ENCODE measurements at regions of chr12 and their contacts with region 1.

Region 1: DNA sequence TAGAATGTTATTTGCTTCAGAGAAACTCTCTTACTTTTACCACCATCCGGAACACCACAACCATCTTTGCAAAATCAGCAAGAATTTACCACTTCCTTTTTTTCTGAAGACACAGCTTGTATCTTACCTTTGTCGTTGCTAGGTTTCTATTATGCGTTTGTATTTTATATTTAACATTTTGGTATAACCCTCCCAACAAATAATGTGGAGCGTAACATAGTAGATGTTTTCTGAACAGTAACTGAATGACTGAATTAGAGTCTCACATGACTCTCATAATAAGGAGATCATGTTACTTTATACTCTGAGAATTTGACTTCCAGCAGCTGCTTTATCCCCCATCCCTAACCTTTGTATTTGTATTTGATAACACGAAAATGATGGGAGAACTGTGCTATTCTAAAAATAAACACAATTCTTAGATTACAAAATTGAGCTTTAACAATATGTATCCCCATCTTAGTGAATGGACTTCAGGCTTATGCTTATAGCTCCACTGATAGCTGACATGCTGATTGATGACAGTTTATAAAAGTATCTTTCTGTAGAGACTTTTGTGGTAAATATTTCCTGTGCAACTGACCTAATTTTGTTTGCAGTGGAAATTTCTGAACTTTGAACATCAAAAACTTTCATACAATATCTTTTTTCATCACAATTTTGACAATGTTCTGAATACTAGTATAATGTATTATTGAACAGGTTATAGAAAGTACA is 7.9 kb upstream of the KLRB1 start:
- DNase-seq: no peak
- H3K4me3 Mint-ChIP-seq: peak overlapping the region; percentile 34
- H3K27ac Mint-ChIP-seq: peak overlapping the region; percentile 65
- H3K4me1 Mint-ChIP-seq: peaks cover 54% of the 10 kb centered on the region
- H3K27me3 Mint-ChIP-seq: no peaks in the 10 kb centered on the region

Region 2: DNA sequence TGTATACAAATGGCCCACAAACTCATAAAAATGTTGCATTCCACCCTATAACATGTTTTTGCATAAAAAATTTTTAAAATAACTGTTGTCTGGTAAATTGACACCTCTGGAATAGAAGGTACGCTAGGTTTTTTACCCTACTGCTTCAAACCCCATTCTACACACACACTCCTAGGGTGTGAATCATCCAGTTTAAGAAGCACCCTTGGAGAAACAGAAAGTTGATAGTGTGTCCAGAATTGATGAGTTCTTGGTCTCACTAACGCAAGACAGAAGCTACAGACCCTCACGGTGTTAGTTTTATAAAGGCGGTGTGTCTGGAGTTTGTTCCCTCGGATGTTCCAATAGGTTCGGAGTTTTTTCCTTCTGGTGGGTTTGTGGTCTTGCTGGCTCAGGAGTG is 166.4 kb before region 1 on chr12:
- CTCF ChIA-PET with region 1: interaction called, 3 read pairs
- intact Hi-C with region 1: loop called (anchors 10 kb)
- DNase-seq: no peak
- H3K4me3 Mint-ChIP-seq: peak overlapping the region; percentile 93
- H3K27ac Mint-ChIP-seq: no peak overlapping the region
- H3K4me1 Mint-ChIP-seq: peaks cover 16% of the 10 kb centered on the region
- H3K27me3 Mint-ChIP-seq: no peaks in the 10 kb centered on the region